ENCODE measurements at regions of chr1 and their contacts with region 1.

Region 1: GRCh38 chr1:161382214-161383019 is 14.7 kb upstream of the CFAP126 start:
- DNase-seq: peak in 2 of 9 experiments; percentile 60 to 73
- ATAC-seq: peak; percentile 88
- H3K4me3 ChIP-seq: no peak overlapping the region
- H3K4me3 Mint-ChIP-seq: no peak overlapping the region
- H3K27ac ChIP-seq: no peak overlapping the region
- H3K27ac Mint-ChIP-seq: no peak overlapping the region
- H3K4me1 ChIP-seq: peaks cover 4% of the 10 kb centered on the region
- H3K4me1 Mint-ChIP-seq: peaks cover 12% of the 10 kb centered on the region
- H3K27me3 ChIP-seq: no peaks in the 10 kb centered on the region
- H3K27me3 Mint-ChIP-seq: no peaks in the 10 kb centered on the region
- CTCF ChIP-seq: peak; percentile 83

Region 2: GRCh38 chr1:161192476-161193465 is 189.6 kb before region 1 on chr1:
- CTCF ChIA-PET with region 1: interaction called, 38 read pairs
- POLR2A ChIA-PET with region 1: no interaction called
- intact Hi-C with region 1: loop called (anchors 1 kb)
- DNase-seq: peak; percentile 39 to 85 (median 70)
- ATAC-seq: peak; percentile 98
- H3K4me3 ChIP-seq: no peak overlapping the region
- H3K4me3 Mint-ChIP-seq: no peak overlapping the region
- H3K27ac ChIP-seq: peak overlapping the region in 1 of 2 experiments; percentile 41
- H3K27ac Mint-ChIP-seq: peak overlapping the region; percentile 70
- H3K4me1 ChIP-seq: peaks cover 37% of the 10 kb centered on the region
- H3K4me1 Mint-ChIP-seq: peaks cover 40% of the 10 kb centered on the region
- H3K27me3 ChIP-seq: no peaks in the 10 kb centered on the region
- H3K27me3 Mint-ChIP-seq: no peaks in the 10 kb centered on the region
- CTCF ChIP-seq: peak; percentile 75

Region 3: GRCh38 chr1:161209790-161210409 is 172.5 kb before region 1 on chr1:
- CTCF ChIA-PET with region 1: interaction called, 38 read pairs
- POLR2A ChIA-PET with region 1: no interaction called
- intact Hi-C with region 1: loop called (anchors 1 kb)
- DNase-seq: peak; percentile 48 to 85 (median 74)
- ATAC-seq: peak; percentile 99
- H3K4me3 ChIP-seq: no peak overlapping the region
- H3K4me3 Mint-ChIP-seq: no peak overlapping the region
- H3K27ac ChIP-seq: peak overlapping the region in 1 of 2 experiments; percentile 11
- H3K27ac Mint-ChIP-seq: peak overlapping the region; percentile 50
- H3K4me1 ChIP-seq: peaks cover 20% of the 10 kb centered on the region
- H3K4me1 Mint-ChIP-seq: peaks cover 37% of the 10 kb centered on the region
- H3K27me3 ChIP-seq: no peaks in the 10 kb centered on the region
- H3K27me3 Mint-ChIP-seq: no peaks in the 10 kb centered on the region
- CTCF ChIP-seq: peak; percentile 60

Region 4: GRCh38 chr1:161216945-161217712 is 165.3 kb before region 1 on chr1:
- CTCF ChIA-PET with region 1: interaction called, 191 read pairs
- POLR2A ChIA-PET with region 1: no interaction called
- intact Hi-C with region 1: no loop called
- DNase-seq: peak in 3 of 9 experiments; percentile 32 to 58 (median 42)
- ATAC-seq: peak; percentile 12
- H3K4me3 ChIP-seq: peak overlapping the region; percentile 20 to 25
- H3K4me3 Mint-ChIP-seq: peak overlapping the region; percentile 54
- H3K27ac ChIP-seq: peak overlapping the region; percentile 18 to 75
- H3K27ac Mint-ChIP-seq: peak overlapping the region; percentile 91
- H3K4me1 ChIP-seq: peaks cover 56% of the 10 kb centered on the region
- H3K4me1 Mint-ChIP-seq: peaks cover 59% of the 10 kb centered on the region
- H3K27me3 ChIP-seq: no peaks in the 10 kb centered on the region
- H3K27me3 Mint-ChIP-seq: no peaks in the 10 kb centered on the region
- CTCF ChIP-seq: no peak

Region 5: GRCh38 chr1:161367684-161368400 is 14.6 kb before region 1 on chr1 and contains the start of gene CFAP126:
- CTCF ChIA-PET with region 1: interaction called, 20 read pairs
- POLR2A ChIA-PET with region 1: interaction called, 3 read pairs
- intact Hi-C with region 1: no loop called
- DNase-seq: peak in 6 of 9 experiments; percentile 20 to 87 (median 58)
- ATAC-seq: peak; percentile 100
- H3K4me3 ChIP-seq: no peak within 1 kb of the TSS
- H3K4me3 Mint-ChIP-seq: no peak within 1 kb of the TSS
- H3K27ac ChIP-seq: peak within 1 kb of the TSS; percentile 23 to 60
- H3K27ac Mint-ChIP-seq: peak within 1 kb of the TSS; percentile 46
- H3K4me1 ChIP-seq: peaks cover 5% of the 10 kb centered on the region
- H3K4me1 Mint-ChIP-seq: peaks cover 8% of the 10 kb centered on the region
- H3K27me3 ChIP-seq: no peaks in the 10 kb centered on the region
- H3K27me3 Mint-ChIP-seq: no peaks in the 10 kb centered on the region
- CTCF ChIP-seq: no peak
- total RNA-seq, gene CFAP126: not detected

Region 6: GRCh38 chr1:161486806-161487741 is 104.7 kb after region 1 on chr1:
- CTCF ChIA-PET with region 1: no interaction called
- POLR2A ChIA-PET with region 1: no interaction called
- intact Hi-C with region 1: no loop called
- DNase-seq: peak in 8 of 9 experiments; percentile 14 to 83 (median 46)
- ATAC-seq: peak; percentile 57
- H3K4me3 ChIP-seq: no peak overlapping the region
- H3K4me3 Mint-ChIP-seq: no peak overlapping the region
- H3K27ac ChIP-seq: no peak overlapping the region
- H3K27ac Mint-ChIP-seq: no peak overlapping the region
- H3K4me1 ChIP-seq: peaks cover 10% of the 10 kb centered on the region
- H3K4me1 Mint-ChIP-seq: peaks cover 11% of the 10 kb centered on the region
- H3K27me3 ChIP-seq: no peaks in the 10 kb centered on the region
- H3K27me3 Mint-ChIP-seq: peaks cover 23% of the 10 kb centered on the region
- CTCF ChIP-seq: peak; percentile 81

Region 7: GRCh38 chr1:162056043-162056442 is 673.6 kb after region 1 on chr1:
- CTCF ChIA-PET with region 1: no interaction called
- POLR2A ChIA-PET with region 1: no interaction called
- intact Hi-C with region 1: no loop called
- DNase-seq: peak in 8 of 9 experiments; percentile 13 to 64 (median 43)
- ATAC-seq: peak; percentile 38
- H3K4me3 ChIP-seq: no peak overlapping the region
- H3K4me3 Mint-ChIP-seq: no peak overlapping the region
- H3K27ac ChIP-seq: no peak overlapping the region
- H3K27ac Mint-ChIP-seq: no peak overlapping the region
- H3K4me1 ChIP-seq: no peaks in the 10 kb centered on the region
- H3K4me1 Mint-ChIP-seq: no peaks in the 10 kb centered on the region
- H3K27me3 ChIP-seq: no peaks in the 10 kb centered on the region
- H3K27me3 Mint-ChIP-seq: peaks cover 15% of the 10 kb centered on the region
- CTCF ChIP-seq: peak; percentile 67